Endothelial cell of umbilical vein (primary cell): ENCODE measurements at regions of chr7 and their contacts with region 1.

Region 1: GRCh38 chr7:50838675-50839377 is 56.1 kb upstream of the GRB10 start:
- DNase-seq: peak; percentile 31
- H3K4me3 ChIP-seq: no peak overlapping the region
- H3K27ac ChIP-seq: peak overlapping the region; percentile 92
- H3K4me1 ChIP-seq: peaks cover 23% of the 10 kb centered on the region
- H3K27me3 ChIP-seq: no peaks in the 10 kb centered on the region
- CTCF ChIP-seq: no peak
- POLR2A ChIP-seq: no peak

Region 2: GRCh38 chr7:50166997-50167965 is 671.5 kb before region 1 on chr7:
- CTCF ChIA-PET with region 1: no interaction called
- POLR2A ChIA-PET with region 1: no interaction called
- dilution Hi-C with region 1: no loop called
- intact Hi-C with region 1: no loop called
- DNase-seq: no peak
- H3K4me3 ChIP-seq: no peak overlapping the region
- H3K27ac ChIP-seq: no peak overlapping the region
- H3K4me1 ChIP-seq: no peaks in the 10 kb centered on the region
- H3K27me3 ChIP-seq: no peaks in the 10 kb centered on the region
- CTCF ChIP-seq: no peak
- POLR2A ChIP-seq: no peak

Region 3: DNA sequence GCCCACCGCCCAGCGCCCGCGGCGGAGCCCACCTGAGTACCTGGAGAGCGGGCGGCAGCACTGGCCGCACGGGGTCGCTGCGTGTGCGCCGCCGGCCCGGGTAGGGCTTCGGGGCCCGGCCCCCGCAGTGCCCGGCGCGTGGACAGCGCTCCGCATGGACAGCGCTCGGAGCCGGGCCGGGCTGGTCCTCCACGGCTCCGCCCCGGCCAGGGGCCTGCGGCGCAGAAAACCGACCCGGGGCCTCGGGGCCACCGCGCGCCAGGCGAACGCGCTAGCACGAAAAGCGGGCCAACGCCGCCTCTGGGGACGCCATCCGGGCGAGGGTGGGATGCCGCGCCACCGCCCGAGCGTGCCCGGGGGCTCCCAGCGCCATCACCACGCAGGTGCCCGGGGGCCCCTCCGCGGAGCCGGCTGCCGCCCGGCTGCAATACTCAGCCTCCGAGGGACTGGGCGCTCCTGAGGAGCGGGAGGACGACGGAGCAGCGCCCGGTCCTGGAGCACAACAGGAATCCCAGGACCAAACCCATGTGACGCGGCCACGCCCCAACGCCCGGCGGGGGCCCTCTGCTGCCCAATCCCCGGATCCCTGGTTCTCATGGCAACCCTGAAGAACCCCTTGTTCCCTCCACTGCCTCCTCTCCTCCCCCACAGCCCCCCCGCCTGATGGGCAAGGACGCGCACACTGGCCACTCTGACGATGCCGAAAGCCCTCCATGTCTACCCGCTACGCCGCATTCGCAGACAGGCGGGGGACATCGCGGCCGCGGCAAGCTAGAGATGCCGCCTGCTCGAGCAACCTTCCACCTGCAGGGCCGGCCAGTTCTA is 56.2 kb before region 1 on chr7 and contains the start of gene GRB10:
- CTCF ChIA-PET with region 1: no interaction called
- POLR2A ChIA-PET with region 1: no interaction called
- dilution Hi-C with region 1: no loop called
- intact Hi-C with region 1: loop called (anchors 2 kb)
- DNase-seq: peak; percentile 35
- H3K4me3 ChIP-seq: peak within 1 kb of the TSS in 2 of 3 experiments; percentile 25 to 41
- H3K27ac ChIP-seq: no peak within 1 kb of the TSS
- H3K4me1 ChIP-seq: peaks cover 4% of the 10 kb centered on the region
- H3K27me3 ChIP-seq: no peaks in the 10 kb centered on the region
- CTCF ChIP-seq: peak; percentile 12 to 32
- POLR2A ChIP-seq: no peak
- total RNA-seq, gene GRB10: 240 and 243 TPM in 2 replicates